ENCODE measurements at regions of chr9 and their contacts with region 1.

Region 1: GRCh38 chr9:87324613-87325194 is 173.0 kb upstream of the DAPK1 start:
- DNase-seq: peak in 3 of 14 experiments; percentile 54 to 68 (median 61)
- ATAC-seq: no peak
- H3K4me3 ChIP-seq: no peak overlapping the region
- H3K4me3 Mint-ChIP-seq: no peak overlapping the region
- H3K27ac ChIP-seq: no peak overlapping the region
- H3K27ac Mint-ChIP-seq: no peak overlapping the region
- H3K4me1 ChIP-seq: no peaks in the 10 kb centered on the region
- H3K4me1 Mint-ChIP-seq: no peaks in the 10 kb centered on the region
- H3K27me3 ChIP-seq: peaks cover 0 to 6% of the 10 kb centered on the region in 2 experiments
- H3K27me3 Mint-ChIP-seq: peaks cover 26% of the 10 kb centered on the region
- CTCF ChIP-seq: peak; percentile 69

Region 2: GRCh38 chr9:86413966-86414880 is 910.5 kb before region 1 on chr9:
- CTCF ChIA-PET with region 1: interaction called, 4 read pairs
- POLR2A ChIA-PET with region 1: no interaction called
- intact Hi-C with region 1: loop called (anchors 5 kb)
- DNase-seq: peak in 3 of 14 experiments; percentile 27 to 35 (median 31)
- ATAC-seq: no peak
- H3K4me3 ChIP-seq: no peak overlapping the region
- H3K4me3 Mint-ChIP-seq: no peak overlapping the region
- H3K27ac ChIP-seq: no peak overlapping the region
- H3K27ac Mint-ChIP-seq: no peak overlapping the region
- H3K4me1 ChIP-seq: no peaks in the 10 kb centered on the region
- H3K4me1 Mint-ChIP-seq: no peaks in the 10 kb centered on the region
- H3K27me3 ChIP-seq: no peaks in the 10 kb centered on the region
- H3K27me3 Mint-ChIP-seq: peaks cover 21% of the 10 kb centered on the region
- CTCF ChIP-seq: peak; percentile 90

Region 3: DNA sequence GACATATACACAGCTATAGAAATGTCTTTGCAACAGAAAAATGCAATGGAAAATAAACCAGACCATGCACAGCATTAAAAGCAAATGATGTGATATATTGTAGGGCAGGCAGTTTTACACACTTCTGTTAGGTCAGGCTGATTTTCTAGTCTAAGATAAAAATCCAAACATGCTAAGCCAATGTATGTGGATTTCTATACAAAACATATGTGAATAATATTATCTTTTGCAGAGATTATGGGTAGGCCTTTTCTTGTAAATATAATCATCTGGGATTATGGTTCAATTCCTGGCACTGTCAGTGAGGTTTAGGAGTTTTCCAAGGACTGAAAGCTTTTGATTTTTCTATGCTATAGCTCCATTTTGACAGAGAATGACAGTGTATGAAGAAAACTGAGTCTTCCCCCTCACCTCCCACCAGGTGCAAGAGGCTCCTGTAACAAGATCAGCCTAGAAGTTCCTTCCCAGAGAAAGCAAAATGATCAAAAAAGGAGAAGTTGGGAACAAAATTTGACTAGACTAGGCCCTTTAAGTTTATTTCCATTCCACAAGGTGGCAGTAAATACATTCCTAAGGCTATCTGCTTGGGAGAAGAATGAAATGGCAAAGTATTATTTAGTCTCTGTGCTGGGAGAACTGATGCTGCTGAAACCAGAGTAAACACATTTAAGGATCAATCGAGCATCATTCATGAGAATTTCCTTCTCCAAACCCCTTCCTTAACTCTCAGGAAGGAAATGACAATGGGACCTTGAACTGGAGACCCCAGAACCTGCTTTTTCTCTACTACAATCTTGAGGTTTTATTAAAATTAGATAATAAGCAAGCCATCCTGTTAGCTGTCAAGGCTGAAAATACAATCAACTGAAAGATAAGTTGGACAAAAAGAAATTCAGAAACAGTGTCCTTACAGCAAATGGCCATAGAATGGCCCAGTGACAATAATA is 837.5 kb before region 1 on chr9:
- CTCF ChIA-PET with region 1: no interaction called
- POLR2A ChIA-PET with region 1: no interaction called
- intact Hi-C with region 1: loop called in 1 of 2 experiments (anchors 2 kb)
- DNase-seq: peak in 3 of 14 experiments; percentile 14 to 25 (median 22)
- ATAC-seq: no peak
- H3K4me3 ChIP-seq: no peak overlapping the region
- H3K4me3 Mint-ChIP-seq: no peak overlapping the region
- H3K27ac ChIP-seq: no peak overlapping the region
- H3K27ac Mint-ChIP-seq: no peak overlapping the region
- H3K4me1 ChIP-seq: no peaks in the 10 kb centered on the region
- H3K4me1 Mint-ChIP-seq: no peaks in the 10 kb centered on the region
- H3K27me3 ChIP-seq: peaks cover 0 to 3% of the 10 kb centered on the region in 2 experiments
- H3K27me3 Mint-ChIP-seq: no peaks in the 10 kb centered on the region
- CTCF ChIP-seq: peak; percentile 47

Region 4: GRCh38 chr9:86637515-86637914 is 687.2 kb before region 1 on chr9:
- CTCF ChIA-PET with region 1: no interaction called
- POLR2A ChIA-PET with region 1: no interaction called
- intact Hi-C with region 1: loop called in 1 of 2 experiments (anchors 10 kb)
- DNase-seq: peak in 2 of 14 experiments; percentile 10 to 15
- ATAC-seq: no peak
- H3K4me3 ChIP-seq: no peak overlapping the region
- H3K4me3 Mint-ChIP-seq: no peak overlapping the region
- H3K27ac ChIP-seq: no peak overlapping the region
- H3K27ac Mint-ChIP-seq: no peak overlapping the region
- H3K4me1 ChIP-seq: no peaks in the 10 kb centered on the region
- H3K4me1 Mint-ChIP-seq: no peaks in the 10 kb centered on the region
- H3K27me3 ChIP-seq: peaks cover 0 to 3% of the 10 kb centered on the region in 2 experiments
- H3K27me3 Mint-ChIP-seq: peaks cover 35% of the 10 kb centered on the region
- CTCF ChIP-seq: no peak

Region 5: DNA sequence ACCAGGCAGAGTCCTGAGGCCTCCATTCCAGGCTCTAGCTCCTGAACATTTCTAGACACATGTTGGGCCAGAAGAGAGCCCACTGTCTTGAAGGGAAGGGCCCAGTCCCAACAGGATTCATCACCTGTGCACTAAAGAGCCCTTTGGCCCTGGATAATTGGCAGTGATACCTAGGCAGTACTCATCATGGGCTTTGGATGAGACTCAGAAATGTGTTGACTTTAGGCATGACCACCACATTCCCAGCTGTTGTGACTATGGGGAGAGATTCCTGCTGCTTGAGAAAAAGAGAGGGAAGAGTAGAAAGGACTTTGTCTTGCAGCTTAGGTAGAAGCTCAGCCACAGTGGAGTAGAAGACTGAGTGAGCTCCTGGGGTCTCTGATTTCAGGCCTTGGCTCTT is 34.6 kb after region 1 on chr9:
- CTCF ChIA-PET with region 1: no interaction called
- POLR2A ChIA-PET with region 1: no interaction called
- intact Hi-C with region 1: no loop called
- DNase-seq: no peak
- ATAC-seq: no peak
- H3K4me3 ChIP-seq: no peak overlapping the region
- H3K4me3 Mint-ChIP-seq: no peak overlapping the region
- H3K27ac ChIP-seq: no peak overlapping the region
- H3K27ac Mint-ChIP-seq: no peak overlapping the region
- H3K4me1 ChIP-seq: no peaks in the 10 kb centered on the region
- H3K4me1 Mint-ChIP-seq: no peaks in the 10 kb centered on the region
- H3K27me3 ChIP-seq: peaks cover 0 to 10% of the 10 kb centered on the region in 2 experiments
- H3K27me3 Mint-ChIP-seq: peaks cover 39% of the 10 kb centered on the region
- CTCF ChIP-seq: no peak

Measured in CD4-positive, alpha-beta T cell (primary cell).